Astrocyte of the cerebellum (primary cell): ENCODE measurements at regions of chr9 and their contacts with region 1.

Region 1: GRCh38 chr9:121529237-121529987 is 29.8 kb upstream of the GGTA1 start:
- DNase-seq: peak; percentile 93
- H3K4me3 ChIP-seq: no peak overlapping the region
- CTCF ChIP-seq: no peak

Region 2: GRCh38 chr9:121445981-121446380 is 83.4 kb before region 1 on chr9:
- in situ Hi-C with region 1: loop called (anchors 5 kb)
- DNase-seq: no peak
- H3K4me3 ChIP-seq: no peak overlapping the region
- CTCF ChIP-seq: no peak

Region 3: GRCh38 chr9:121485623-121486022 is 43.8 kb before region 1 on chr9:
- in situ Hi-C with region 1: no loop called
- DNase-seq: no peak
- H3K4me3 ChIP-seq: no peak overlapping the region
- CTCF ChIP-seq: no peak

Region 4: DNA sequence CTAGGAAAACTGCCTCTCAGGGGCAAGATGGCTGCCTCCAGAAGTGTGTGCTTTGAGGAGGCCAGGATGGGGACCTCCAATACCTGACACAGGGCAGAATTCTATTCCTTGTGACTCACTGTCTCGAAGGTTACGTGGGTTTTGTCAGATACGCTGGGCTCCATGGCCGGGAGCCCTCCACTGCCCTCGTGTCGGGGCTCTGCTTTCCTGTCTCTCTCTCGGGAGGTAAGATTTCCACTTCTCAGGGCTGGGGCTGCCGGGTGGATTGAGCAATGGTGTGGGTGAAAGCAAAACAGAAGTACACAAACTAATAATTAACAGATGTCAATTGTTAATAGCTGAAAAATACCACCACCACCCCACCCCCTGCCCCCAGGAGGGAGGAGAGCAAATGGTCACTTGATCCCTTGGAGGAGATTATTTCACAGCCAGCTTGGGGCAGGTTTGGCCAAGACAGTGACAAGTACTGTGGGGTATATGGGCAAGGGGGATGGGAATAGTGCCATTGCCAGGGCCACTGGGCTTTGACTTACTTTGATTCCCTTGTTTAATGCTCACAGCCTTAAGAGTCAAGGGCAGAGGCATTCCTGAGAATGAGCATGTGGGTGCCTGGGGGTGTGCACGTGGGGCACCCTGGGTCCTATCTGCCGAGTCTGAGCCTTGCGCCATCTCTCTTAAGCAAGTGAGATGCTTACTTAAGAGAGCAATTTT is 93.1 kb after region 1 on chr9:
- in situ Hi-C with region 1: no loop called
- DNase-seq: no peak
- H3K4me3 ChIP-seq: no peak overlapping the region
- CTCF ChIP-seq: no peak